Esophagus squamous epithelium (tissue), 5 donors: ENCODE measurements at regions of chr5 and their contacts with region 1.

Region 1: DNA sequence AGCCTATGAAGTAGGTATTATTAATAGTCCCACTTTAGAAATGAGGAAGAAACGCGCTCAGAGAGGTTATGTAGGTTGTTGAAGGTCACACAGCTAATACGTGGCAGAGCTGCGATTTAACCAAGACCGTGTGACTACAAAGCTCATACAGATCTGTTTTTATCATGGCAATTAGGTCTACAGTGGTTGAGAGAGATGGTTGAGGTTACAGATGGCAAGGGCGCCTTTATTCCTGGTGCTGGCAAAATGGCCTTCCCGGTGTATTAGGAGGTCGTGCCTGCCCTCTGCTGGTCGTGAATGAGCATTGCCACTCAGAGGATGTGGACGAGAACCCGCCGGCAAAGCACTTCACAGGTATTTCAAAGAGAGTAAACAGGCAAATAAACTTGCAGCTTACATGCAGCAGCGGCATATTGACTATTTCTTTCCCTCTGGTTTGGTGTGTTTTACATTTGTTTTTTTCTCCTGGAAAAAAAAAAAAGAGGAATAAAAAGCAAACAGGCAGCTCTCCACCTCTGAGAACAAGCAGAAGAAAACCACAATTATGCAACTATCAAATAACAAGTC is 65.3 kb upstream of the EGFLAM start:
- DNase-seq: no peak
- H3K4me3 ChIP-seq: no peak overlapping the region
- H3K27ac ChIP-seq: no peak overlapping the region
- H3K4me1 ChIP-seq: no peaks in the 10 kb centered on the region
- H3K27me3 ChIP-seq: peaks cover 0 to 24% (median 0%) of the 10 kb centered on the region in 4 donors
- CTCF ChIP-seq: peak; percentile 38 to 88 (median 81)
- POLR2A ChIP-seq: no peak

Region 2: GRCh38 chr5:37412515-37413277 is 780.4 kb before region 1 on chr5:
- intact Hi-C with region 1: loop called (anchors 10 kb)
- DNase-seq: no peak
- H3K4me3 ChIP-seq: no peak overlapping the region
- H3K27ac ChIP-seq: no peak overlapping the region
- H3K4me1 ChIP-seq: no peaks in the 10 kb centered on the region
- H3K27me3 ChIP-seq: no peaks in the 10 kb centered on the region
- CTCF ChIP-seq: peak; percentile 58 to 89 (median 76)
- POLR2A ChIP-seq: no peak

Region 3: GRCh38 chr5:37837414-37838032 is 355.6 kb before region 1 on chr5:
- intact Hi-C with region 1: loop called (anchors 5 kb)
- DNase-seq: no peak
- H3K4me3 ChIP-seq: peak overlapping the region; percentile 17 to 73 (median 49)
- H3K27ac ChIP-seq: peak overlapping the region; percentile 9 to 82 (median 48)
- H3K4me1 ChIP-seq: peaks cover 27 to 75% (median 31%) of the 10 kb centered on the region in 3 donors
- H3K27me3 ChIP-seq: peaks cover 0 to 99% (median 14%) of the 10 kb centered on the region in 4 donors
- CTCF ChIP-seq: peak; percentile 25 to 88 (median 72)
- POLR2A ChIP-seq: no peak

Region 4: DNA sequence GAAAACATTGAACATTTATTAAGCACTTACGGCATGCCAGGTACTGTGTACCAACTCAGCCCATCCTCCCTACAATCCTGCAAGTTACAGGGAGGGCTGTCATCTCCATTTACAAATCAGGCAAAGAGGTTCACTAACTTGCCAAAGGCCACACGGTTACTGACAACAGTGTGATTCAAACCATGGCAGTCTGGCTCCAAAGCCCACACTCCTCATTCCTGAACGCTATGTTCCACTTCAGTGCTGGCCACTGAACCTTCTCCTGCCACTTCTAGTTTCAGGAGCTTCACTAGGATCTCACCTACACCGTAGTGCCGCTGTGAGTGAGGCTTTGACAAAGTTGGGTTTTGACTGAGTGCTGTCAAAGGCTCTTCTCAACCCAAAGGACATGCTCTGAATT is 370.5 kb after region 1 on chr5:
- intact Hi-C with region 1: no loop called
- DNase-seq: no peak
- H3K4me3 ChIP-seq: no peak overlapping the region
- H3K27ac ChIP-seq: no peak overlapping the region
- H3K4me1 ChIP-seq: peaks cover 0 to 14% (median 0%) of the 10 kb centered on the region in 3 donors
- H3K27me3 ChIP-seq: no peaks in the 10 kb centered on the region
- CTCF ChIP-seq: no peak
- POLR2A ChIP-seq: no peak